ENCODE measurements at regions of chr4 and their contacts with region 1.

Region 1: GRCh38 chr4:43132010-43132582 is 239.6 kb downstream of the GRXCR1 start:
- DNase-seq: peak; percentile 81
- ATAC-seq: peak; percentile 57
- H3K4me3 ChIP-seq: peak overlapping the region; percentile 52
- H3K27ac ChIP-seq: no peak overlapping the region
- H3K4me1 ChIP-seq: peaks cover 20% of the 10 kb centered on the region
- H3K27me3 ChIP-seq: no peaks in the 10 kb centered on the region
- CTCF ChIP-seq: peak; percentile 85

Region 2: GRCh38 chr4:42995343-42995944 is 136.7 kb before region 1 on chr4:
- CTCF ChIA-PET with region 1: interaction called, 3 read pairs
- POLR2A ChIA-PET with region 1: no interaction called
- intact Hi-C with region 1: loop called (anchors 2 kb)
- DNase-seq: peak; percentile 49
- ATAC-seq: peak; percentile 63
- H3K4me3 ChIP-seq: no peak overlapping the region
- H3K27ac ChIP-seq: no peak overlapping the region
- H3K4me1 ChIP-seq: no peaks in the 10 kb centered on the region
- H3K27me3 ChIP-seq: no peaks in the 10 kb centered on the region
- CTCF ChIP-seq: peak; percentile 72

Region 3: GRCh38 chr4:43351970-43352806 is 220.1 kb after region 1 on chr4:
- CTCF ChIA-PET with region 1: no interaction called
- POLR2A ChIA-PET with region 1: no interaction called
- intact Hi-C with region 1: loop called (anchors 1 kb)
- DNase-seq: peak; percentile 71
- ATAC-seq: peak; percentile 84
- H3K4me3 ChIP-seq: no peak overlapping the region
- H3K27ac ChIP-seq: peak overlapping the region; percentile 36
- H3K4me1 ChIP-seq: peaks cover 27% of the 10 kb centered on the region
- H3K27me3 ChIP-seq: no peaks in the 10 kb centered on the region
- CTCF ChIP-seq: no peak

Region 4: GRCh38 chr4:43512253-43512652 is 380.2 kb after region 1 on chr4:
- CTCF ChIA-PET with region 1: no interaction called
- POLR2A ChIA-PET with region 1: no interaction called
- intact Hi-C with region 1: loop called (anchors 2 kb)
- DNase-seq: peak; percentile 80
- ATAC-seq: peak; percentile 100
- H3K4me3 ChIP-seq: no peak overlapping the region
- H3K27ac ChIP-seq: peak overlapping the region; percentile 2; the same call in 1 of the 2 replicates
- H3K4me1 ChIP-seq: 0 out of 2 replicates have a peak, but pooled peaks cover 4% of the 10 kb centered on the region
- H3K27me3 ChIP-seq: no peaks in the 10 kb centered on the region
- CTCF ChIP-seq: no peak

Region 5: GRCh38 chr4:43843501-43843900 is 711.4 kb after region 1 on chr4:
- CTCF ChIA-PET with region 1: no interaction called
- POLR2A ChIA-PET with region 1: no interaction called
- intact Hi-C with region 1: loop called (anchors 5 kb)
- DNase-seq: peak; percentile 54
- ATAC-seq: peak; percentile 77
- H3K4me3 ChIP-seq: no peak overlapping the region
- H3K27ac ChIP-seq: no peak overlapping the region; the same call in 1 of the 2 replicates
- H3K4me1 ChIP-seq: peaks cover 21% of the 10 kb centered on the region
- H3K27me3 ChIP-seq: no peaks in the 10 kb centered on the region
- CTCF ChIP-seq: peak; percentile 54

Region 6: GRCh38 chr4:44425614-44426208 is 1293.6 kb after region 1 on chr4:
- CTCF ChIA-PET with region 1: no interaction called
- POLR2A ChIA-PET with region 1: no interaction called
- intact Hi-C with region 1: loop called (anchors 1 kb)
- DNase-seq: peak; percentile 66
- ATAC-seq: peak; percentile 71
- H3K4me3 ChIP-seq: no peak overlapping the region
- H3K27ac ChIP-seq: no peak overlapping the region
- H3K4me1 ChIP-seq: no peaks in the 10 kb centered on the region
- H3K27me3 ChIP-seq: no peaks in the 10 kb centered on the region
- CTCF ChIP-seq: peak; percentile 82